Gastrocnemius medialis (tissue), 4 donors: ENCODE measurements at regions of chr2 and their contacts with region 1.

Region 1: GRCh38 chr2:119218478-119219064 is 5.1 kb upstream of the STEAP3 start:
- DNase-seq: peak; percentile 69 to 76
- ATAC-seq: peak; percentile 77
- H3K4me3 ChIP-seq: no peak overlapping the region
- H3K27ac ChIP-seq: peak overlapping the region; percentile 10 to 80 (median 71)
- H3K4me1 ChIP-seq: peaks cover 7 to 16% of the 10 kb centered on the region in 2 donors
- H3K27me3 ChIP-seq: no peaks in the 10 kb centered on the region
- CTCF ChIP-seq: peak; percentile 54 to 78 (median 68)
- POLR2A ChIP-seq: no peak

Region 2: DNA sequence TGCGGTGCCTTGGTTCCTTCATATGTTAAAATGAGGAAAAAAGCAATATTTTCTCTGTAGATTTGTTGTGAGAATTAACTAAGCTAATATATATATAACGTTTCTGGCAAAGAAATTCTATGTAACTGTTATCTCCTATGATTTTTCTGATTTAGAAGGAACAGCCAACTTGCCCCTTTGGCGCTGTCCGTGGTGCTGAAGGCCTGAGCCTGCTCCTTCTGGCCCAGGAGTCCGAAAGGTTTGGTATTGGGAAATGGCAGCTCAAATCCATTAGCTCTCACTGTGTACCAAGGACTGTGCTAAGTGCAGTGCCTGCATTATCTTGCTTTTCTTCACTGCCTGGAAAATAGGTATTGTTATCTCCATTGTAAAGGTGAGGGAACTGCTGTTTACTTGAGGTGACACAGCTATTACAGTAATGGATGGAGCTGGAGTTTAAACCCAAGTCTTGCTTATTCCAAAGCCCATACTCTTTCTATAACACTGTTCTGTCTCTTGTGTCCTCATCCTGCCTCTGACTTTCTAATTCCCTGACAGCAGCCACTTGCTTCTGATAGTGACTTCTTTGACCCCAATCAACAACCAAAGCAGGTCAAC is 112.2 kb before region 1 on chr2:
- in situ Hi-C with region 1: no loop called
- intact Hi-C with region 1: no loop called
- DNase-seq: no peak
- ATAC-seq: no peak
- H3K4me3 ChIP-seq: no peak overlapping the region
- H3K27ac ChIP-seq: no peak overlapping the region
- H3K4me1 ChIP-seq: no peaks in the 10 kb centered on the region
- H3K27me3 ChIP-seq: no peaks in the 10 kb centered on the region
- CTCF ChIP-seq: no peak
- POLR2A ChIP-seq: no peak

Region 3: DNA sequence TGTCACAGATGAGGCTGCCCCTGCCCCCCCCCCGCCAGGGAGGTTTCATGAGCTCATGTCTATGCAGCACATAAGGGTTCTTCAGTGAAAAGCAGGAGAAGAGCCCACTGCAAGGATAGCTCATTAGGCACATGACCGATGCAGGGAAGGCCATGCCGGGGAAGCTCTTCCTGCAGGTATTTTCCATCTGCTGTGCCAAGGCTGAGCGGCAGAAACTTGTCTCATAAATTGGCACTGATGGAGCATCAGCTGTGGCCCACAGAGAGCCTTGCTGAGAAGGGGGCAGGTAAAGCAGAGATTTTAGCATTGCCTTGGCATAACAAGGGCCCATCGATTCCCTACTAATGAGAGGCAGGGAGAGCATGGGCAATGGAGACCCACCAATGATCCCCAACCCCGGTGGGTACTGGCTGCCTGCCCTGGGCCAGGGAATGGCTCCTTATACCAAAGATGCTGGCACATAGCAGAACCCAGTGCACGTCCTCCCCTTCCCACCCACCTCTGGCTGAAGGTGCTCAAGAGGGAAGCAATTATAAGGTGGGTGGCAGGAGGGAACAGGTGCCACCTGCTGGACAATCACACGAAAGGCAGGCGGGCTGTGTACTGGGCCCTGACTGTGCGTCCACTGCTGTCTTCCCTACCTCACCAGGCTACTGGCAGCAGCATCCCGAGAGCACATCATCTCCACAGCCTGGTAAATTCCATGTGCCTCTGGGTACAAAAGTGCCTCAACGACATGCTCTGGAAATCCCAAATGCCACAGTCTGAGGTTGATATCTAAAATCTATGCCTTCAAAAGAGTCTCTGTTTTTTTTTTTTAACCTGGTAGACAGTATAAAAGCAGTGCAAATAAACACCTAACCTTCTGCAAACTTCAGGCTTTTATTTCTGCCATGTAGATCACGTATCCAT is 46.5 kb after region 1 on chr2:
- in situ Hi-C with region 1: loop called in 3 of 4 experiments (anchors 10 kb)
- intact Hi-C with region 1: loop called (anchors 1 kb)
- DNase-seq: peak; percentile 34 to 68
- ATAC-seq: peak; percentile 94 to 96
- H3K4me3 ChIP-seq: no peak overlapping the region
- H3K27ac ChIP-seq: peak overlapping the region in 1 of 4 donors; percentile 12
- H3K4me1 ChIP-seq: peaks cover 8% of the 10 kb centered on the region in 2 donors
- H3K27me3 ChIP-seq: no peaks in the 10 kb centered on the region
- CTCF ChIP-seq: peak; percentile 63 to 88 (median 82)
- POLR2A ChIP-seq: no peak

Region 4: DNA sequence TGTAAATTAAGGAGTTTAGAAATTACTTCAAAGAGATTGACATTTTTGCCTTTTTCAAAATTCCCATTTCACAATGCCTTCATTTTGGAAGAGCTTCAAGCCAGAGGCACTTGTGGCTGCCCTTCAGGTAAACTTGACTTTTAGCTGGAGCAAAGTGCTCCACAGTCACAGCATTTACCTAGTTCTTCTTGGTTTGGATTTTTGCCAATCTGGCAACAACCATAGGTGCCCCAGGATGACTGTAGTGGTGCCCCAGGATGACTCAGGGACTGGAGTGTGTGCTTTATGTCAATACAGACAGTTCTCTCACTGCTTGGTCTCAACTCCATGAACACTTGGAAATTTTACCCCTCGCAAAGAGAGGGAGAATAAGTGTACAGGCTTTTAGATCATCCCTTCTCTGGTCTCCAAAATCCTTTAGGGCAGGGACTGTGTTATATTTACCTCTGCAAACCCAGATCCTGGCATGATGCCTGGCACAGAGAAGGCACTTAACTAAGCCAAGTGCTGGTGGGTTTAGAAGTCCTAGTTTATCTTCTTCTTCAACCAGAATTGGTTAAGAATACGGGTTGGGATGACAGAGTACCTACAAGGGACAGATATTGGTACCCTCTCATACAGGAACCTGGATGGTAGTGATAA is 525.8 kb after region 1 on chr2:
- in situ Hi-C with region 1: no loop called
- intact Hi-C with region 1: no loop called
- DNase-seq: no peak
- ATAC-seq: no peak
- H3K4me3 ChIP-seq: no peak overlapping the region
- H3K27ac ChIP-seq: no peak overlapping the region
- H3K4me1 ChIP-seq: peaks cover 4 to 21% of the 10 kb centered on the region in 2 donors
- H3K27me3 ChIP-seq: no peaks in the 10 kb centered on the region
- CTCF ChIP-seq: no peak
- POLR2A ChIP-seq: no peak